ENCODE measurements at regions of chr1 and their contacts with region 1.

Region 1: GRCh38 chr1:180502360-180503273 is at the start of gene ACBD6:
- DNase-seq: peak; percentile 93
- H3K4me3 Mint-ChIP-seq: peak within 1 kb of the TSS; percentile 96
- H3K27ac Mint-ChIP-seq: peak within 1 kb of the TSS; percentile 94
- H3K4me1 Mint-ChIP-seq: peaks cover 33% of the 10 kb centered on the region
- H3K27me3 Mint-ChIP-seq: no peaks in the 10 kb centered on the region
- total RNA-seq, gene ACBD6: 36.7 to 40.8 TPM

Region 2: GRCh38 chr1:179954493-179955297 is 547.9 kb before region 1 on chr1 and contains the start of gene CEP350:
- CTCF ChIA-PET with region 1: no interaction called
- POLR2A ChIA-PET with region 1: no interaction called
- intact Hi-C with region 1: loop called (anchors 1 kb)
- DNase-seq: peak; percentile 99
- H3K4me3 Mint-ChIP-seq: peak within 1 kb of the TSS; percentile 80
- H3K27ac Mint-ChIP-seq: peak within 1 kb of the TSS; percentile 95
- H3K4me1 Mint-ChIP-seq: peaks cover 42% of the 10 kb centered on the region
- H3K27me3 Mint-ChIP-seq: no peaks in the 10 kb centered on the region
- total RNA-seq, gene CEP350: 31.7 to 34.2 TPM

Region 3: GRCh38 chr1:180515864-180516388 is 13.3 kb after region 1 on chr1:
- CTCF ChIA-PET with region 1: interaction called, 22 read pairs
- POLR2A ChIA-PET with region 1: interaction called, 4 read pairs
- intact Hi-C with region 1: no loop called
- DNase-seq: peak; percentile 66
- H3K4me3 Mint-ChIP-seq: no peak overlapping the region
- H3K27ac Mint-ChIP-seq: no peak overlapping the region
- H3K4me1 Mint-ChIP-seq: no peaks in the 10 kb centered on the region
- H3K27me3 Mint-ChIP-seq: peaks cover 5% of the 10 kb centered on the region

Region 4: GRCh38 chr1:180631766-180632325 is 129.2 kb after region 1 on chr1 and contains the start of gene XPR1:
- CTCF ChIA-PET with region 1: interaction called, 4 read pairs
- POLR2A ChIA-PET with region 1: no interaction called
- intact Hi-C with region 1: loop called (anchors 1 kb)
- DNase-seq: peak; percentile 99
- H3K4me3 Mint-ChIP-seq: no peak within 1 kb of the TSS
- H3K27ac Mint-ChIP-seq: peak within 1 kb of the TSS; percentile 82
- H3K4me1 Mint-ChIP-seq: peaks cover 5% of the 10 kb centered on the region
- H3K27me3 Mint-ChIP-seq: no peaks in the 10 kb centered on the region
- total RNA-seq, gene XPR1: 17.9 to 18.4 TPM

Region 5: DNA sequence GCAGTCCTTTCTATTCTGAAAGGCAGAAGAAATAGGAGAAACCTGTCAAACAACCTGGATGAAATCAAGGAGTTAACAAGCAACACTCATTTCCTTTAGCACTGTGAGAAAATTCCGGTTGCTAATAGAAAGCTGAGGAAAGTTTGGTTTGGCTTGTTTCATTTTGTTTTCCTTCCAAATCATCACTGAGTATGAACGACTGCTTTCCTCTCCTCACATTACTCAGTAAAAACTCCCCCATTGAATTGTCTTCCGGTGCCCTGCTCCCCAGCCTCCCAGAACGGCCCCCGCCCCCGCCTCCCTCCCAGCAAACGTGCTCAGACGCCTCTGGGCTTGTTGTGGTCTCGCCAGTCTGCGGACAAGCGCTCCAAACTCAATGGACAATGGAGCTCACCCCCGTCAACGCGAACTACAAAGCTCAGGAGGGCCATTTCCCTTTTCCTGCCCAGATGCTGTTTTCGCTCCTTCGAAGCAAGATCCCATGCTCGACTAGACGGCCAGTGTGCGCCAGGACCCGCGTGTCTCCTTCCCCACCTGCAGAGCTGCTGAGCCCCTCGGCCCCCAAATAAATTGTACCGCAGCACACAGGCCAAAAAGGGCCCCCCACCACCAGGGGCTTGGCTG is 519.3 kb after region 1 on chr1:
- CTCF ChIA-PET with region 1: no interaction called
- POLR2A ChIA-PET with region 1: interaction called, 4 read pairs
- intact Hi-C with region 1: loop called (anchors 2 kb)
- DNase-seq: peak; percentile 84
- H3K4me3 Mint-ChIP-seq: peak overlapping the region; percentile 94
- H3K27ac Mint-ChIP-seq: peak overlapping the region; percentile 97
- H3K4me1 Mint-ChIP-seq: peaks cover 37% of the 10 kb centered on the region
- H3K27me3 Mint-ChIP-seq: no peaks in the 10 kb centered on the region

Region 6: GRCh38 chr1:181397845-181398244 is 895.2 kb after region 1 on chr1:
- CTCF ChIA-PET with region 1: no interaction called
- POLR2A ChIA-PET with region 1: no interaction called
- intact Hi-C with region 1: loop called (anchors 10 kb)
- DNase-seq: peak; percentile 39
- H3K4me3 Mint-ChIP-seq: no peak overlapping the region
- H3K27ac Mint-ChIP-seq: peak overlapping the region; percentile 53
- H3K4me1 Mint-ChIP-seq: peaks cover 38% of the 10 kb centered on the region
- H3K27me3 Mint-ChIP-seq: no peaks in the 10 kb centered on the region